Activated B cell treated with CpG ODN at 0.5 μM for 24 hours (primary cell): ENCODE measurements at regions of chr13 and their contacts with region 1.

Region 1: DNA sequence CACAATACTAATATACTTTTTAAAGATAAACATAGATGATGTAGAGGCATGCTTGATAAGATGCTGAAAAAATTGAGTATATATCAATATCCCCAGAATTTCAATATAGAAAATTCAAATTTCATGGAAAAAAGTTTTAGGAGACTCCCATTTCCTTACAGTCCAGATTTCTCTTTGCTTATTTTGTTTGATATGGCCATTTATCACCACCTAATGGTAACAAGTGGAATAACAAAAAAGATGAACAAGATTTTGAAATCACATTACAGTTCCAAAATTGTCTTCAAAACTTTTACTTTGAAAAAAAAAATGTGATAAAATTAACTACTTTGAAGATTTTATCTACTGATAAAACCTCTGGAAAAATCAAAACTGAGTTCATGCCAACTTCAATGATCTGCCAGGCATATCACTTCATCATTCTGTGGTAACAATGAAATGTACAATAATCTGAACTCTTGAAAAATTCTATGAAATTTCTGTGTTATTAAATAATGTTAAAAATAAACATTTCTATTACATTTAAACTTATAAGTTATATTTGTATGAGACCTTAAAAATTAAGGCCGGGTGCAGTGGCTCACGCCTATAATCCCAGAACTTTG is 17.5 kb downstream of the MIPEP start:
- DNase-seq: no peak
- ATAC-seq: no peak
- H3K4me3 Mint-ChIP-seq: no peak overlapping the region
- H3K27ac Mint-ChIP-seq: no peak overlapping the region
- H3K4me1 Mint-ChIP-seq: peaks cover 14% of the 10 kb centered on the region
- H3K27me3 Mint-ChIP-seq: no peaks in the 10 kb centered on the region
- CTCF ChIP-seq: peak; percentile 78

Region 2: DNA sequence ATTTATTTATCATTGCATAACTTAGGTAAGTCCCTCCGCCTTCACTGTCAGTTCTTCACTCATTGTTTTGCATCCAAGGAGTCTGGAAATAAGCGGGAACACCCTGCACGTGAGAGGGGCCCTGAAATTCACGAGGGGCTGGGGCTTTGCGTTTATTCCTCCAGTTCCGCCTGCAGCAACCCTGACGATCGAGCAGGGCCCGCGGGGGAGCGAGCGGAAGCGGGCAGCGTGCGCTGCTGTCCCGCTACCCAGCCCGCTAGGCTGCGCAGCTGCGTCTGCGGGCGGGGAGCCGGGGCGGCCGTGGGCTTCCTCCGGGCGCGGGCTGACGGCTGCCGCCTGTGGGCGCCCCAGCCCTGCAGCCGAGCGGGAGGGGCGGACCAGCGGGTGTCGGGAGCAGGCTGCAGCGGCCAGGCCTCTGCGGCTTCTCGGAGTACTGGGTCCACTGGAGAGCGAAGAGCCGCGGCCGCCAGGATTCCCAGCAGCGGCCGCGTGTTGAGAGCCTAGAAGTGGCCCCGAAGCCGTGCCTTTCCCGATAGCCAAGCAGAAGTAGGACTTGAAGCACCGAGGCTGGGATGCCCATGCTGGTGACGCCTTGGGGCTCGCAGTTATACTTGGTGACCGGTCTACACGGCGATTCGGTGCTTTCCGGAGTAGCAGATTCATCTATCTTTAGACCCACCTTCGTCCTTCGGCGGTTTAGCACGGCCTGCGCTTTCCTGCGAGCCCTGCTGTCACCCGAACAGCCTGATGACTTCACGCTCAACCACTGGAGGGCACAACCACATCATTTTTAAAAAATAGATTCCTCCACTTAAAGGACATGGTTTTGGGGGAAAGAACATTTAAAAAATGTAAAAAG is 405.3 kb before region 1 on chr13:
- CTCF ChIA-PET with region 1: interaction called, 7 read pairs
- POLR2A ChIA-PET with region 1: no interaction called
- intact Hi-C with region 1: loop called (anchors 1 kb)
- DNase-seq: peak; percentile 51
- ATAC-seq: peak; percentile 88
- H3K4me3 Mint-ChIP-seq: peak overlapping the region; percentile 79
- H3K27ac Mint-ChIP-seq: no peak overlapping the region
- H3K4me1 Mint-ChIP-seq: peaks cover 8% of the 10 kb centered on the region
- H3K27me3 Mint-ChIP-seq: peaks cover 19% of the 10 kb centered on the region
- CTCF ChIP-seq: no peak

Region 3: GRCh38 chr13:23599083-23599925 is 272.4 kb before region 1 on chr13:
- CTCF ChIA-PET with region 1: no interaction called
- POLR2A ChIA-PET with region 1: no interaction called
- intact Hi-C with region 1: loop called (anchors 1 kb)
- DNase-seq: no peak
- ATAC-seq: no peak
- H3K4me3 Mint-ChIP-seq: no peak overlapping the region
- H3K27ac Mint-ChIP-seq: no peak overlapping the region
- H3K4me1 Mint-ChIP-seq: no peaks in the 10 kb centered on the region
- H3K27me3 Mint-ChIP-seq: peaks cover 27% of the 10 kb centered on the region
- CTCF ChIP-seq: no peak

Region 4: GRCh38 chr13:23715762-23716235 is 155.9 kb before region 1 on chr13:
- CTCF ChIA-PET with region 1: no interaction called
- POLR2A ChIA-PET with region 1: no interaction called
- intact Hi-C with region 1: loop called (anchors 5 kb)
- DNase-seq: no peak
- ATAC-seq: no peak
- H3K4me3 Mint-ChIP-seq: no peak overlapping the region
- H3K27ac Mint-ChIP-seq: no peak overlapping the region
- H3K4me1 Mint-ChIP-seq: no peaks in the 10 kb centered on the region
- H3K27me3 Mint-ChIP-seq: peaks cover 2% of the 10 kb centered on the region
- CTCF ChIP-seq: no peak

Region 5: DNA sequence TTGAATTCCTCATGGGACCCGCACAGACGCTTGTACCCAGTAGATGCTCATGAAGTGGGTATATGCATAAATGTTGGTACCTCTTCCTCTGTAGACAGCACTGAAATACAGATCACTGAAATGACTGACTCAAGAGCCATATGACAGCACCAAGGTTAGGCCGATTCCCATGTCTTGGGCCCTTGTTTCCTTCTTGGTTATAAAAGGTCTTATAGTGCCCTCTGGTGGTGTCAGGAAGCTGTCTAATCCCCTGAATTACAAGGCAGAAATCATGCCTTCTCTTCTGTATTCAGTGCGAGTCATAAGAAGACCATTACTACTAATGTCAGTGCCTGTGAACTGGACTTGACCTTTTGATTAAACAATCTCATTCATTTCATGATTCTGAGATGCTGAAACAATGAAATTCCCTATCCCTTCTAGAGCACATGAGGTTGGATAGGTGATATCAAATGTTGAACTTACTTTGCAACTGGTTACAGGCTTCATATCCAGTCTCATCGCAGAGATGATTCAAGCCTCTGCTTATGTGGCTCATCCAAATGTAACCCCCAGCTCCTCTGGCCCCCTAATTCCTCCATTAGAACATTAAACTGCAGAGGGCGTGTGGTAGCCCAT is 348.5 kb after region 1 on chr13:
- CTCF ChIA-PET with region 1: interaction called, 3 read pairs
- POLR2A ChIA-PET with region 1: no interaction called
- intact Hi-C with region 1: loop called (anchors 1 kb)
- DNase-seq: no peak
- ATAC-seq: peak; percentile 61
- H3K4me3 Mint-ChIP-seq: no peak overlapping the region
- H3K27ac Mint-ChIP-seq: no peak overlapping the region
- H3K4me1 Mint-ChIP-seq: peaks cover 53% of the 10 kb centered on the region
- H3K27me3 Mint-ChIP-seq: no peaks in the 10 kb centered on the region
- CTCF ChIP-seq: no peak